Esophagus muscularis mucosa (tissue), 4 donors: ENCODE measurements at regions of chr15 and their contacts with region 1.

Region 1: DNA sequence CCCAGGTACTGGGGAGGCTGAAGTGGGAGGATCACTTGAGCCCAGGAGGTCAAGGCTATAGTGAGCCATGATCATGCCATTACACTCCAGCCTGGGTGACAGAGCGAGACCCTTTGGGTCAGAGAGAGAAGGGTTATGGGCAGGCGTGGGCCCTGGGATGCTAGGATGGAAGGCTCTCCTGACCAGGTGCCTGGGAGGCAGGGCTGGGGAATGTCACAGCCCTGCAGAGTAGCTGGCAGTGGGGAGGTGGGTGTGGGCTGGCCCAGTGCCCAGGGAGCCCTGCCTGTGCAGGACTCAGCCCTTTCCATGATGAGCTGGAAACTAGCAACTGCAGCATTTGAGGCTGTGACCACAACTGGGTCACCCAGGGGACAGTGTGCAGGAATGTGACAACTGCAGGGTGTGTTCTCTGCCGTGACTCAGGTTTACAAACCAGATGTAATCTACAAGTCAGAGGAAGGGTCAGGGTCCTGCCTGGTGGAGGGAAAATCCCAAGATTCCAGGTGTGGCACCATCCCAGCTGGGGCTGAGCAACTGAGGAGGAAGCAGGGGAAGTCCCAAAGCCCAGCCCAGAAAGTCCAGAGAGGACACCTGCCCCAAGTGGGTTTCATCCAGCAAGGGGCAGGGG is 45.4 kb downstream of the SLC28A1 start:
- DNase-seq: no peak
- H3K4me3 ChIP-seq: no peak overlapping the region
- H3K27ac ChIP-seq: no peak overlapping the region
- H3K4me1 ChIP-seq: peaks cover 7 to 12% (median 9%) of the 10 kb centered on the region in 4 donors
- H3K27me3 ChIP-seq: no peaks in the 10 kb centered on the region
- CTCF ChIP-seq: no peak
- EP300 ChIP-seq: no peak
- POLR2A ChIP-seq: no peak

Region 2: DNA sequence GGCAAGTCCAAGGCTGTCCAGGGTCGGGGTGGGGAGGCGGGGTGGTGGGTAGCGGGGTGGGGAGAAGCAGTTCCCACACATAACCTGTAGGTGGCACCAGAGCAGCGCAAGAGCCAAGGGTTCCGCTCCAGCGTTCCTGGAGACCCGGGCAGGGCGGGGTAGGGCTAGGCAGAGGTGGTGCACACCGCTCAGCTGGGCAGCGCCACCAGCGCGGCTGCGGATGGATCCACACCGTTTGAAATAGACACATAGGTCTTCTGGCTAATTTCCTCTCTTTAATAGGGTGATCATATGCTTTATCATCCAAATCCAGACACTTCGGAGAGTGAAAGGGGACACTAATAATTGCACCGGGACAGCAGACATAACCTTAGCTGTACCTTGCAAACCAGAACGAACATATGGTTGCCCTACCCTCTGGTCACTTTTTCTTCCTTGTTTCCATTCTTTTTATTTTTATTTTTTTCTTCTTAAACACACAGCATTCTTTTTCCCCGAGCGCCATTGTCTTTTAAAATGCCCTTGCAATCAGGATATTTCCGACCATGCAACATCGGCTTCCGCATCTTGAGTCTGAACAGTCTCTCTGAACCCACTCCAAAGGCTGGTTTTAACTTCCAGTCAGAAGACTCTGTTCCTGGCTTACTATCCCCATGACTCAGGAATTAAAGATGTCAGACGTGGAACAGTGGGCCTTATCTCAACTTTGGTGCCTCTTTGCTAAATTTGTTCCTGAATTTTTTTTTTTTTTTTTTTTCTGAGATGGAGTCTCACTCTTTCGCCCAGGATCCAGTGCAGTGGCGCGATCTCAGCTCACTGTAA is 341.6 kb before region 1 on chr15:
- intact Hi-C with region 1: loop called (anchors 1 kb)
- DNase-seq: peak; percentile 94
- H3K4me3 ChIP-seq: peak overlapping the region; percentile 35 to 50 (median 38)
- H3K27ac ChIP-seq: no peak overlapping the region
- H3K4me1 ChIP-seq: peaks cover 0 to 11% (median 9%) of the 10 kb centered on the region in 4 donors
- H3K27me3 ChIP-seq: no peaks in the 10 kb centered on the region
- CTCF ChIP-seq: peak in 2 of 3 experiments; percentile 67 to 89
- EP300 ChIP-seq: no peak
- POLR2A ChIP-seq: no peak

Region 3: GRCh38 chr15:84844964-84845363 is 84.9 kb before region 1 on chr15:
- intact Hi-C with region 1: loop called (anchors 5 kb)
- DNase-seq: no peak
- H3K4me3 ChIP-seq: no peak overlapping the region
- H3K27ac ChIP-seq: peak overlapping the region; percentile 20 to 72 (median 64)
- H3K4me1 ChIP-seq: peaks cover 11 to 34% (median 34%) of the 10 kb centered on the region in 4 donors
- H3K27me3 ChIP-seq: no peaks in the 10 kb centered on the region
- CTCF ChIP-seq: no peak
- EP300 ChIP-seq: no peak
- POLR2A ChIP-seq: no peak